Activated CD4-positive, alpha-beta T cell treated with anti-CD3 and anti-CD28 coated beads, Interleukin-2, amount 10 ng/mL, durations not matched to agents 24 days and 14 days (primary cell): ENCODE measurements at regions of chr7 and their contacts with region 1.

Region 1: GRCh38 chr7:130277763-130278643 is 11.3 kb downstream of the CPA2 start:
- DNase-seq: no peak
- H3K4me3 Mint-ChIP-seq: peak overlapping the region; percentile 29
- H3K27ac Mint-ChIP-seq: peak overlapping the region; percentile 87
- H3K4me1 Mint-ChIP-seq: peaks cover 20% of the 10 kb centered on the region
- H3K27me3 Mint-ChIP-seq: no peaks in the 10 kb centered on the region

Region 2: DNA sequence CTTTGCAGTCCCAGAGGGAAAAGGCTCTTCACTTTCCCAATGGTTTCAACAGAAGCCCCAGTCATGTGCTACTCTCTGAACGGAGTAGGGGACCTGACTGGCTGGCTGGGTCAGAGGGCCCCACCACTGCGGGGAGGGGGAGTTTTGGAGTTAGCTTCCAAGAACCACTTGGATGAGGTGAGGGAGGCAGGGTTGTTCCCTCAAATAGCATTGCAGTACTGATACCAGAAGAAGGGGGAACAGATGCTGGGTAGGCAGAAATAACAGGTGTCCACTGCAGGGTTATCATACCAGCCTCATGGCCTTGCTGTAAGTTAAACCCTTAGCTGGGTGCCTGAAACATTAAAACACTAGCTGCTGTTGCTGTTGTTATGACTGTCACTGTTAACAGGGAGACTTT is 456.5 kb before region 1 on chr7:
- intact Hi-C with region 1: no loop called
- DNase-seq: no peak
- H3K4me3 Mint-ChIP-seq: no peak overlapping the region
- H3K27ac Mint-ChIP-seq: no peak overlapping the region
- H3K4me1 Mint-ChIP-seq: peaks cover 8% of the 10 kb centered on the region
- H3K27me3 Mint-ChIP-seq: peaks cover 15% of the 10 kb centered on the region

Region 3: GRCh38 chr7:130050773-130051125 is 227.3 kb before region 1 on chr7:
- intact Hi-C with region 1: loop called (anchors 1 kb)
- DNase-seq: no peak
- H3K4me3 Mint-ChIP-seq: peak overlapping the region; percentile 99
- H3K27ac Mint-ChIP-seq: peak overlapping the region; percentile 98
- H3K4me1 Mint-ChIP-seq: peaks cover 10% of the 10 kb centered on the region
- H3K27me3 Mint-ChIP-seq: no peaks in the 10 kb centered on the region

Region 4: GRCh38 chr7:130182990-130183389 is 95.0 kb before region 1 on chr7:
- intact Hi-C with region 1: loop called (anchors 1 kb)
- DNase-seq: no peak
- H3K4me3 Mint-ChIP-seq: no peak overlapping the region
- H3K27ac Mint-ChIP-seq: peak overlapping the region; percentile 78
- H3K4me1 Mint-ChIP-seq: peaks cover 20% of the 10 kb centered on the region
- H3K27me3 Mint-ChIP-seq: no peaks in the 10 kb centered on the region

Region 5: DNA sequence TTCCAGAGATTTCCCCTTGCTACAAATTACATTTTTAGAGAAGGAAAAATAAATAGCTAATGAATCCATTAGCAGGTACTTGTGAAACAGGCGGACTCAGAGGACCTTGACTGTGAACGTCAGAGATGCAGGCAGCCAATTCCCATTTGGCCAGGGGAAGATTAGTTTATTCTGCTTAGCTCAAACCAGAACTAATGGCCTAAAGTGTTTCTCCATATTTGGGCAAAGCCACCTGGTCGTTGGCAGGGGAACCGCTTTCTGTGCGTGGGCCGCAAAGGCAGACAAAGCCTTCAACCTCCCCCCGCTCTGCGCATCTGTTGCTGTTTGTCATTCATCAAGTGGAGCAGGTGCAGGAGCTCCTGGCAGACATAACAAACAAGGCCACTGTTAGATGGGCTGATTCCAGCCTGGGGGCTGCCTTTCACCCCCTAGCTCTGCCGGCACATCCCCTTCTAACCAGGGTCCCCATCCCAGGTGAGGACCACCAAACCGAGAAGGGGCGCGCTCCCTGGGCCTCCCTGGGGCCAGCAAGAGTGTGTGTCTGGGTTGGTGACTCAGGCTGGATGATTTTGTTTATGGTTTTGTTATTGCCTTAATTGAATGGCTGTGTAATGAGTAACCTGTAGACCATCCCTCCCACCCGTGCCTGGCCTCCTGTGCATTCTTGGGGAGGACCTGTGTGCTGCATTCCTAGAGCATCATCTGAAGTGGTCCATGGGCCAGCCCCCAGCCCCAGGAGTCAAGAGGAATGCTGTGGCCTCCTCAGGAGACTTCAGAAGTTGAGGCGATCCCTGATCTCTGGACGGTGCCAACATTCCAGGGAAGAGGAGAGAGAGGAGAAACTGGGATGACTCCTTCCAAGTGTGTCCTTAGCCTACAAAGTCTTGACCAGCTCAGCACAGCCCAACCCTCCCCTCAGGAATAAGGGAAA is 87.8 kb after region 1 on chr7:
- intact Hi-C with region 1: loop called (anchors 1 kb)
- DNase-seq: no peak
- H3K4me3 Mint-ChIP-seq: peak overlapping the region; percentile 45
- H3K27ac Mint-ChIP-seq: peak overlapping the region; percentile 76
- H3K4me1 Mint-ChIP-seq: peaks cover 30% of the 10 kb centered on the region
- H3K27me3 Mint-ChIP-seq: no peaks in the 10 kb centered on the region

Region 6: GRCh38 chr7:130379532-130379920 is 101.5 kb after region 1 on chr7:
- intact Hi-C with region 1: no loop called
- DNase-seq: no peak
- H3K4me3 Mint-ChIP-seq: no peak overlapping the region
- H3K27ac Mint-ChIP-seq: no peak overlapping the region
- H3K4me1 Mint-ChIP-seq: no peaks in the 10 kb centered on the region
- H3K27me3 Mint-ChIP-seq: no peaks in the 10 kb centered on the region